ENCODE measurements at regions of chr17 and their contacts with region 1.

Region 1: DNA sequence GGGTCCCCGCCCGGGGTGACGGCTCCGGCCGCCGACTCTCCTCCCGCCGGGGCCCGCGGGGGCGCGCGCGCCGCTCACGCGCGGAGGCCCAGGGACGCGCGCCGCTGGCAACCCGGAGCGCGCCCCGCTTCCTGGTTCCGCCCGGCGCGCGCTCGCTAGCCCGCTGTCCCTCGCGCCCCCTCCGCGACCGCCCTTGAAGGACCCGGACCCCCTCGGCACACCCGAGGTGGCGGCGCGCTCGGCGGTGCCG is at the start of gene STAT5B:
- DNase-seq: peak; percentile 84 to 92 (median 88)
- ATAC-seq: peak; percentile 1
- H3K4me3 ChIP-seq: peak within 1 kb of the TSS; percentile 81
- H3K27ac ChIP-seq: peak within 1 kb of the TSS; percentile 93
- H3K4me1 ChIP-seq: peaks cover 11 to 23% of the 10 kb centered on the region in 2 experiments; a peak in 4 of 5 replicates
- H3K27me3 ChIP-seq: no peaks in the 10 kb centered on the region
- CTCF ChIP-seq: no peak
- EP300 ChIP-seq: no peak
- POLR2A ChIP-seq: no peak
- RAD21 ChIP-seq: no peak
- polyA plus RNA-seq, gene STAT5B: 20.8 to 23.5 TPM

Region 2: GRCh38 chr17:42287926-42288802 is 11.9 kb after region 1 on chr17 and contains the start of gene STAT5A:
- CTCF ChIA-PET with region 1: no interaction called
- POLR2A ChIA-PET with region 1: interaction called, 15 read pairs
- in situ Hi-C with region 1: no loop called
- intact Hi-C with region 1: no loop called
- DNase-seq: peak; percentile 57 to 75 (median 68)
- ATAC-seq: peak; percentile 45
- H3K4me3 ChIP-seq: peak within 1 kb of the TSS; percentile 88
- H3K27ac ChIP-seq: peak within 1 kb of the TSS; percentile 78
- H3K4me1 ChIP-seq: peaks cover 36 to 64% of the 10 kb centered on the region in 2 experiments
- H3K27me3 ChIP-seq: no peaks in the 10 kb centered on the region
- CTCF ChIP-seq: no peak
- EP300 ChIP-seq: no peak
- POLR2A ChIP-seq: no peak; the same call in 1 of the 2 replicates
- RAD21 ChIP-seq: no peak
- polyA plus RNA-seq, gene STAT5A: 79.9 to 81.8 TPM

Measured in K562 (cell line).